Activated naive CD4-positive, alpha-beta T cell treated with anti-CD3 and anti-CD28 coated beads for 36 hours (primary cell): ENCODE measurements at regions of chr10 and their contacts with region 1.

Region 1: GRCh38 chr10:90871766-90872647 is at the start of gene RPP30:
- DNase-seq: peak; percentile 89
- H3K4me3 Mint-ChIP-seq: peak within 1 kb of the TSS; percentile 96
- H3K27ac Mint-ChIP-seq: peak within 1 kb of the TSS; percentile 90
- H3K4me1 Mint-ChIP-seq: peaks cover 24% of the 10 kb centered on the region
- H3K27me3 Mint-ChIP-seq: peaks cover 14% of the 10 kb centered on the region
- total RNA-seq, gene RPP30: 74.7 to 75.8 TPM

Region 2: GRCh38 chr10:89414146-89414878 is 1457.7 kb before region 1 on chr10 and contains the start of gene IFIT5:
- CTCF ChIA-PET with region 1: no interaction called
- intact Hi-C with region 1: loop called (anchors 5 kb)
- DNase-seq: peak; percentile 64
- H3K4me3 Mint-ChIP-seq: peak within 1 kb of the TSS; percentile 85
- H3K27ac Mint-ChIP-seq: peak within 1 kb of the TSS; percentile 96
- H3K4me1 Mint-ChIP-seq: peaks cover 45% of the 10 kb centered on the region
- H3K27me3 Mint-ChIP-seq: no peaks in the 10 kb centered on the region
- total RNA-seq, gene IFIT5: 7.0 to 7.2 TPM

Region 3: GRCh38 chr10:89793649-89794254 is 1078.3 kb before region 1 on chr10:
- CTCF ChIA-PET with region 1: no interaction called
- intact Hi-C with region 1: loop called (anchors 1 kb)
- DNase-seq: peak; percentile 37
- H3K4me3 Mint-ChIP-seq: no peak overlapping the region
- H3K27ac Mint-ChIP-seq: no peak overlapping the region
- H3K4me1 Mint-ChIP-seq: no peaks in the 10 kb centered on the region
- H3K27me3 Mint-ChIP-seq: peaks cover 13% of the 10 kb centered on the region

Region 4: DNA sequence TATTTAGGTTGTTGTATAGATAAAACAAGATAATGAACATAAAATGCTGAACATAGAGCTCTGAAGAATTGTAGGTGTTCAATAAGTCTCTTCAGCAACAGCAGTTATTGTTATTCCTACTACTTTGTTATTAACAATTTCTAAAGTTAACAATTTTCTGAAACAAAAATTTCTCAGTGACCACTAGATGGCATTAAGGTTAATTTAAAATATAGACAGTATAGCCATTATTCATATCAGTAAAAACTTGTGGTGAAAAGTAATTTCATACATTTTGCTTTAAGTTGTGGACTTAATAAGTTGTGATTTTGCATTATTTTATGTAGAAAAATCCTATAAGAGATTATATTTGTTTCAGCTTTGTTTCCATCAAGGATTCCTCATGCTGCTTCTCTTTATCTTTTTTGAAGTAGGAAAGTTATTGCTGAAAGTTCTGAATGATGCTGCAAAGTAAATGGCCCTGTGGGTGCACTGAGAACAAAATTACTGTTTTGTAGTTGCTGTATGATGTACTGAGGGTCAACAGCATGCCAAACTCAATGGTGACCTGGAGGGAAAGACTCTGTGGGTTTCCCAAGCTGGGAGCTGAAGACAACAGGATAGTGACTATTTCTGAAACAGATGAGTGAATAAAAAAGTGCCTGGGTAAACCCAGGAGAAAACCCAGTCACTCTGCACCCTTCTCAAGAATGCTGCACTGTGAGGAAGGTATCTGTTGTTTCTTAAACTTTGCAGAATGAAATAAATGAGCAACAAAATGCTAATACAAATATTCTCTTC is 917.0 kb before region 1 on chr10:
- CTCF ChIA-PET with region 1: no interaction called
- intact Hi-C with region 1: loop called (anchors 2 kb)
- DNase-seq: no peak
- H3K4me3 Mint-ChIP-seq: no peak overlapping the region
- H3K27ac Mint-ChIP-seq: no peak overlapping the region
- H3K4me1 Mint-ChIP-seq: peaks cover 2% of the 10 kb centered on the region
- H3K27me3 Mint-ChIP-seq: peaks cover 10% of the 10 kb centered on the region

Region 5: DNA sequence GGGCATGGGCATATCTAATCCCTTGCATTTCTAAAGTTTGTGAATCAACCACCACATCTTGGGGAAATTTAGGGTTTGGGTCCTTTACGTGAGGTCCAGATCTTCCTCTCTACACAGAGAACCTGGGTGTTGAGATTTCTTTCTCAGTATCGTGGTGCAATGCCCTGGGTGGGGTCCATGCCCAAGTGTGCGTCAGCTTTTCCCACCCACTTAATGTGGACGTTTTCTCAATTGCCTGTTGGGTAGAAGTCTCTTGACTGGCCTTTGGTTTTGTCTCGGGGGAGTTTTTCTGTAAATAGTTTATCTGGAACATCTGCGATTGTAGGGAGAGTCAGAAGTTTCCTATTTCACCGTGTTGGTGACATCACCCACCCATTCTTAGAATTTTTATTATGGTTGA is 375.4 kb before region 1 on chr10:
- CTCF ChIA-PET with region 1: no interaction called
- intact Hi-C with region 1: no loop called
- DNase-seq: no peak
- H3K4me3 Mint-ChIP-seq: no peak overlapping the region
- H3K27ac Mint-ChIP-seq: no peak overlapping the region
- H3K4me1 Mint-ChIP-seq: no peaks in the 10 kb centered on the region
- H3K27me3 Mint-ChIP-seq: no peaks in the 10 kb centered on the region

Region 6: GRCh38 chr10:90857635-90858460 is 14.2 kb before region 1 on chr10 and contains the start of gene HTR7:
- CTCF ChIA-PET with region 1: interaction called, 15 read pairs
- intact Hi-C with region 1: loop called (anchors 1 kb)
- DNase-seq: peak; percentile 52
- H3K4me3 Mint-ChIP-seq: peak within 1 kb of the TSS; percentile 82
- H3K27ac Mint-ChIP-seq: peak within 1 kb of the TSS; percentile 36
- H3K4me1 Mint-ChIP-seq: peaks cover 7% of the 10 kb centered on the region
- H3K27me3 Mint-ChIP-seq: peaks cover 53% of the 10 kb centered on the region
- total RNA-seq, gene HTR7: 0.10 TPM in 1 of 2 experiments, not detected in the other

Region 7: DNA sequence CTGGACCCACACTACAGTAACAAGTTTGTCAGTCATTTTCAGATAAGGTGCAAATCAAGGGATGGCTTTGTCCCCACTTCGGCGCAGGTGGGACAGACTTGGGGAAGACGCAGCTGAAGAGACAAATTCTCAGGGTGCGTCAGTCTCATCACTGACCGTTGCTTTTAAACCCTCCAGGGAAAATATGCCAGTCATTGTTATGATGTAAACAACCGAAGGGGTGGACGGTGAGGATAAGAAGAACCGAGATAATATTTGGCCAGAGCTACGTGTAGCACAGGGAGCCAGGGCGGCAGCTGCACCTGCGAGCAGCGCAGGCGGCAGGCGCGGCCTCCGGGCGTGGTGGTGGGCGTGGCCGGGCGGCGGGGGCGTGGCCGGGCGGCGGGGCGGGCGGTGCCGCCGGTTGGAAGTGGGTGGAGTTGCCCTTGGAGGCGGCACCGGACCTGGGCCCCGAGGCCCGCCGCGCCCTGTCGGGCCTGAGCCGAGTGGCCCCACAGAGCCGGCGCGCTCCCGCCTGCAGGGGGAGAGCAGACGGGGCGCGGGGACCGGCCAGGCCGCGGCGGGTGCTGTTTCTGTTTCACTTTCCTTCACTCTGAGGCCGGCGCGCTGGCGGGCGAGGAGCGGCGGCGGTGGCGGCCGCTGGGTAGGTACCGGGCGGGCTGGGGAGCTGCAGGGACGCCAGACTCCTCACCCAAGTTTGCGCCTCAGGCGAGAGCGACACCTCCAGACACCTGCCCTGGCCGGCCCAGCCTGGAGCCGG is 348.4 kb after region 1 on chr10 and contains the start of gene PCGF5:
- CTCF ChIA-PET with region 1: no interaction called
- intact Hi-C with region 1: loop called (anchors 1 kb)
- DNase-seq: peak; percentile 89
- H3K4me3 Mint-ChIP-seq: peak within 1 kb of the TSS; percentile 80
- H3K27ac Mint-ChIP-seq: peak within 1 kb of the TSS; percentile 22
- H3K4me1 Mint-ChIP-seq: peaks cover 33% of the 10 kb centered on the region
- H3K27me3 Mint-ChIP-seq: no peaks in the 10 kb centered on the region
- total RNA-seq, gene PCGF5: 34.2 to 36.4 TPM